ENCODE measurements at regions of chr19 and their contacts with region 1.

Region 1: DNA sequence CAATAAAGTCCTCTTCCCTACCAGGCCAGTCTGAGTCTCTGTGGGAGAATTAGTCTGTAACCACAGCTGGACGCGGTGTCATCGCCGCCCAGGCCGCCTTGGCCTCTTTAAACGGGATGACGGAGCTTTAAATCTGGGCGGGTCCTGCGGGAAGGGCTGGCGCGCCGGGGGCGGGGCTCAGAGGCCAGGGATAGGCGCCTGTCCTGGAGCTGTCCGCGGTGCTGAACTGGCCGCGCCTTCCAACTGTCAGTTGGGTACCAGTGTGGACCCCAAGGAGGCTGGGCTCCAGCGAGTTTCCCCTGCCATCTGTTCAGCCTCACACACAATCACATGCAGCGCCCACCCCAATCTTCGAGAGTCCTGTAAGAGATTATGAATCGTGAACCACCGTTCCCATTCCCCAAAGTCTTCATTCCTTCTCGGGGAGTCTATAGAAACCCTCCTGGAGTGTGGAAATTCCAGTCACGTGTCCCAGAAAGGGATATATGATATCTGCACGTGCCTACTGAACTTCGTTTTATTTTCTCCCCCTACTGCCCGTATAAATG is 11.5 kb downstream of the APLP1 start:
- DNase-seq: peak; percentile 94
- H3K4me3 ChIP-seq: no peak overlapping the region
- H3K27ac ChIP-seq: no peak overlapping the region
- H3K4me1 ChIP-seq: no peaks in the 10 kb centered on the region
- H3K27me3 ChIP-seq: no peaks in the 10 kb centered on the region
- CTCF ChIP-seq: no peak
- POLR2A ChIP-seq: no peak

Region 2: DNA sequence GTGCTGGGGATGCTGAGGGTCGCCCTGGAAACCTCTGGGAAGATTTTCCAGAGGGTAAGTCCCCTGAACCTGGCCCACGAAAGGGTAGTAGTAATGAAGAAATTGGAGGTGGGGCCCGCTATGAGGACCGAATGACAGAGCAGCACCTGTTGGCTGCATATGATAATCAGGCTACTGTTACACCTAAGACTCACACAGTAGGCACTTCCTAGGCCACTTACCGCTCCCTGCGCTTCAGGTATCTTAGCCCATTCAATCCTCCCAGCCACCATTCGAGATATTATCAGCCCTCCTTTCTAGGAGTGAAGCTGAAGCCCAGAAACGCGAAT is 52.0 kb after region 1 on chr19:
- intact Hi-C with region 1: loop called (anchors 2 kb)
- DNase-seq: no peak
- H3K4me3 ChIP-seq: no peak overlapping the region
- H3K27ac ChIP-seq: no peak overlapping the region
- H3K4me1 ChIP-seq: peaks cover 10% of the 10 kb centered on the region
- H3K27me3 ChIP-seq: no peaks in the 10 kb centered on the region
- CTCF ChIP-seq: peak in 1 of 3 experiments; percentile 9
- POLR2A ChIP-seq: no peak